ENCODE measurements at regions of chr2 and their contacts with region 1.

Region 1: DNA sequence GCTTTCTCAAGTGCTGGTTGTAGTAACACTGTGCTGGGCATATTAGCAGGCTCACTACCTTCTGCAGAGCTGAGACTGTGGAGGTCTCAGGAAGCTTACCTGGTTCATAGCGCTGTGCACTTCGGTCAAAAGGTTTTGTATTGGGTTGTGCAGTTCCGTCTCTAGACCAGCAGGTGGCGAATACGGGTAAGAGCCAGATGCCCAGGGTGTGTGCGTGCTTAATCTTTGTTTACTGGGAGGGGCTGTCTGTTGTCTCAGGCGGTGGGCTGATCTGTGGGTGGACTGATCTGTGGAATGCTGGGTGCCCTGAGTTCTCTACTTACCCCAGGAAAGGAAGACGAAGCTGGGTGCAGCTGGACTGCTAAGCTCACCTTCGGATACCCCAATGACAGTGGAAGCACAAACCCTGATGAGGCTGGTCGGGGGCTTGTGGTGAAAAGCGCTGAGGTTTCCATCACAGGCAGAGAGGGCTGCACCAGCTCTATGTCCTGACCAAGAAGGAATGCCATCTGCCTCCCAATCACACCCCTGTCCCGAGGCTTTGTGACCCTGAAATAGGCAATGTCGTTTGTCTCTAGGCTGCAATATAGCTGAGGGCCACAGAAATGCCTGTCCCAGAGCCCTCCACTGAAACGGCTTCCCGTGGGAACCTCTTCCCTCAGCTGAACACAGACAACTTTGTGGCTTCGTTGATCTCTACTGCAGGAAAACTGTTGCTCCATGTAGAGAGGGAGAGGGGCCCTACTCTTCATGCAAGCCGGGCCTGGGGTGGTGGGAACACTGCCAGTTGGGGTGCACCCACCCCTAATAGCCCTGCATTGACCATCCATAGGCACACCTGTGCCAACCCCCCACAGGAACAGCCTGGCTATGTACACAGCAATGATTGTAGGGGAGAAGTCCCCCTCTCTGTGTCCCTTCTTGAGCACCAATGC is 45.9 kb upstream of the FAM117B start:
- DNase-seq: peak; percentile 70
- H3K4me3 Mint-ChIP-seq: no peak overlapping the region
- H3K27ac Mint-ChIP-seq: no peak overlapping the region
- H3K4me1 Mint-ChIP-seq: peaks cover 6% of the 10 kb centered on the region
- H3K27me3 Mint-ChIP-seq: no peaks in the 10 kb centered on the region

Region 2: GRCh38 chr2:202574541-202574940 is 14.4 kb before region 1 on chr2:
- CTCF ChIA-PET with region 1: interaction called, 12 read pairs
- POLR2A ChIA-PET with region 1: no interaction called
- DNase-seq: no peak
- H3K4me3 Mint-ChIP-seq: no peak overlapping the region
- H3K27ac Mint-ChIP-seq: no peak overlapping the region
- H3K4me1 Mint-ChIP-seq: no peaks in the 10 kb centered on the region
- H3K27me3 Mint-ChIP-seq: no peaks in the 10 kb centered on the region

Region 3: GRCh38 chr2:202602285-202602684 is 13.4 kb after region 1 on chr2:
- CTCF ChIA-PET with region 1: interaction called, 27 read pairs
- POLR2A ChIA-PET with region 1: no interaction called
- DNase-seq: no peak
- H3K4me3 Mint-ChIP-seq: no peak overlapping the region
- H3K27ac Mint-ChIP-seq: no peak overlapping the region
- H3K4me1 Mint-ChIP-seq: no peaks in the 10 kb centered on the region
- H3K27me3 Mint-ChIP-seq: no peaks in the 10 kb centered on the region

Region 4: GRCh38 chr2:202726070-202726469 is 137.2 kb after region 1 on chr2:
- CTCF ChIA-PET with region 1: no interaction called
- POLR2A ChIA-PET with region 1: no interaction called
- DNase-seq: no peak
- H3K4me3 Mint-ChIP-seq: no peak overlapping the region
- H3K27ac Mint-ChIP-seq: no peak overlapping the region
- H3K4me1 Mint-ChIP-seq: no peaks in the 10 kb centered on the region
- H3K27me3 Mint-ChIP-seq: no peaks in the 10 kb centered on the region

Region 5: DNA sequence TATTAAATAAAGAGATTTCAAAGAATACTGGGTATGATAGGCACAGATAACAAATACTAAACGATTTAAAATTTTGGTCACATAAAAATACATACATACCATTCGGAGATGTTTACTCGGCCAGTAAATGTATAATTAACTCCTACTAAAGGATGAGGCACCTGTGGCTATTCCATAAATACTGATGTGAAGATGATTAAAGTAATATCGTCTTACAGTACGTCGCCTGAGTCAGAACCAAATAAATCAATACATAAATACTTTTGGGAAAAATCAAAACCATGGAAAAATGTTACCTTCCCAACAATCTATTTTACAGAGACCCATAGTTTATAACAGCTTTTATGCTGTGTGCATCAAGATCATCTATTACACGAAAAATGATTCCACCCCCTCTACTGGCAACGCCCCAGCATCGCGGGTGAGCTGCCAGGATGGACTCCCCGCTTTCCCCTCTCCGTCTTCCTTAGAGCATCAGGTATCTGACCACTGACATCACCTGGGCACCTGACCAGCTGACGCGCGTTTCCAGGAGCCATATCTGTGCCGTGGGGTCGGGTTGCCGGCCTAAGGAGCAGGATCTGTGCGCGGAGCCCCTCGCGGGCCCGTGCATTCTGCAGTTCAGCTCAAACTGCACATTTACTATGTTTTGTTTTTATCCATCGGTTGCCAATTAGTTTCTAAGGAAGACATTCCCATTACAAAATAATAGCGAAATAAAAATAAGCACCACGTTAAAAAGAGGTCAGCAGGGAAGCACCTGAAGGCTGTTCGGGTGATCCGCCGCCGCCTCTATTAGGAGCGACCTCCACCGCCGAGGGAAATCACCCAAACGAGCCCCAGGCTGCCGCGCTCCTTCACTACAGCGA is 281.8 kb after region 1 on chr2:
- CTCF ChIA-PET with region 1: interaction called, 29 read pairs
- POLR2A ChIA-PET with region 1: interaction called, 4 read pairs
- DNase-seq: peak; percentile 69
- H3K4me3 Mint-ChIP-seq: peak overlapping the region; percentile 81
- H3K27ac Mint-ChIP-seq: peak overlapping the region; percentile 47
- H3K4me1 Mint-ChIP-seq: peaks cover 12% of the 10 kb centered on the region
- H3K27me3 Mint-ChIP-seq: no peaks in the 10 kb centered on the region

Measured in activated CD4-positive, alpha-beta memory T cell treated with anti-CD3 and anti-CD28 coated beads, Interleukin-2, amount 10 ng/mL, durations not matched to agents 7 days and 5 days (primary cell).